K562 (cell line): ENCODE measurements at regions of chr10 and their contacts with region 1.

Region 1: DNA sequence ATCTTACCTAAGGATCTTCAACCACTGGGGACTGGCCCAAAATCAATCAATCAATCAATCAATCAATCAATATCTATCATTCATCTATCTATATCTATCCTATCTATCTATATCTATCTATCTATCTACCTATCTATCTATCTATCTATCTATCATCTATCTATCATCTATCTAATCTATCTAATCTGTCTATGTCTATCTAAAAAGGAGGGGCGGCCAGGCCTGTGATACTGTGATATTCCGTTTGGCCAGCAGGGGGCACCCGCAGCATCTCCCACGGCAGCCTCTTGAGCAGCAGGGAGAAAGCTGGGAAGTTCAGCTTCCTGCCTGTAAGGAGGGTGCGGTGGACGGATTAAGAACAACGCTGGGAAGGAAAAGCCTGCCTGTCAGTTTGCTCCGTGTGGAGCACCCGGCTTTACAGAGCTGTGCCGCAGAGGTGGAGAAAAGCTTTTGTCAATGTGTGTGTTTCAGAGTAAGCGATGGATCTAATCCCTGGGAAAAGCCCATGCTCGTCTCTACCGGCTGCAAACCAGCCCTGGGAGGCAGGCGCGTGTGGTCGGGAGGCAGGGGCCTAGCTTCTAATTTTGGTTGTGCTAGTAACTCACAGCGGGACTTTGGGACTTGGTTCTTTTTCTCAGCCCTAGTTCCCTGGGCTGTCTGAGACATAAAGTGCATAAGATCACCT is 125.0 kb downstream of the SH2D4B start:
- DNase-seq: peak; percentile 83 to 92 (median 88)
- ATAC-seq: peak; percentile 87
- H3K4me3 ChIP-seq: no peak overlapping the region
- H3K27ac ChIP-seq: no peak overlapping the region
- H3K4me1 ChIP-seq: no peaks in the 10 kb centered on the region; a peak in 1 of 5 replicates
- H3K27me3 ChIP-seq: peaks cover 0 to 25% of the 10 kb centered on the region in 2 experiments; a peak in 2 of 5 replicates
- CTCF ChIP-seq: peak; percentile 84 to 91 (median 87)
- EP300 ChIP-seq: no peak
- POLR2A ChIP-seq: no peak
- RAD21 ChIP-seq: peak; percentile 73 to 86

Region 2: GRCh38 chr10:80382989-80383388 is 279.7 kb before region 1 on chr10:
- CTCF ChIA-PET with region 1: no interaction called
- POLR2A ChIA-PET with region 1: no interaction called
- in situ Hi-C with region 1: no loop called
- intact Hi-C with region 1: loop called (anchors 5 kb)
- DNase-seq: peak in 2 of 4 experiments; percentile 57
- ATAC-seq: peak; percentile 48
- H3K4me3 ChIP-seq: no peak overlapping the region
- H3K27ac ChIP-seq: no peak overlapping the region
- H3K4me1 ChIP-seq: no peaks in the 10 kb centered on the region
- H3K27me3 ChIP-seq: peaks cover 5% of the 10 kb centered on the region in 2 experiments; a peak in 4 of 5 replicates
- CTCF ChIP-seq: peak; percentile 66 to 90 (median 79)
- EP300 ChIP-seq: no peak
- POLR2A ChIP-seq: no peak
- RAD21 ChIP-seq: peak; percentile 82

Region 3: GRCh38 chr10:80397014-80397413 is 265.7 kb before region 1 on chr10:
- CTCF ChIA-PET with region 1: no interaction called
- POLR2A ChIA-PET with region 1: no interaction called
- in situ Hi-C with region 1: no loop called
- intact Hi-C with region 1: no loop called
- DNase-seq: peak in 1 of 4 experiments; percentile 4
- ATAC-seq: no peak
- H3K4me3 ChIP-seq: no peak overlapping the region
- H3K27ac ChIP-seq: no peak overlapping the region
- H3K4me1 ChIP-seq: no peaks in the 10 kb centered on the region
- H3K27me3 ChIP-seq: peaks cover 11 to 42% of the 10 kb centered on the region in 2 experiments
- CTCF ChIP-seq: no peak
- EP300 ChIP-seq: no peak
- POLR2A ChIP-seq: no peak
- RAD21 ChIP-seq: no peak

Region 4: DNA sequence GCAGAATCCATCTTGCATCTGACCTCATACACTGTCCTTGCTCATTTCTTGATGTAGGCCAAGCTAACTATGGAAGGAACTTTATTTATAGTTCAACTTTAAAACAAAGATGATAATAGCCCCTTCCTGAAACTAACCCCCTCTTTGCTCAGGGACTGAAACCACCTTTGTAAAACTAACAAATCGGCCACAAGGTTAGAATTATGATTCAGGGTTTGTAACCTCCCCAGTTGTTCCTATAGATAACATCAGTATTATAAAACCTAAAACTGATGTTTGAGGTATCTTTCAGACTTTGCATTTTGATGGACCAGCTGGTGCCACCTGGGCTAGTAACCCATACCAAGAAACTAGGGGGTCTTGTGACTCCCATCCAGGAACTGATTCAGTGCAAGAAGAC is 18.4 kb after region 1 on chr10:
- CTCF ChIA-PET with region 1: no interaction called
- POLR2A ChIA-PET with region 1: no interaction called
- in situ Hi-C with region 1: no loop called
- intact Hi-C with region 1: no loop called
- DNase-seq: no peak
- ATAC-seq: no peak
- H3K4me3 ChIP-seq: no peak overlapping the region
- H3K27ac ChIP-seq: no peak overlapping the region
- H3K4me1 ChIP-seq: no peaks in the 10 kb centered on the region
- H3K27me3 ChIP-seq: no peaks in the 10 kb centered on the region
- CTCF ChIP-seq: no peak
- EP300 ChIP-seq: no peak
- POLR2A ChIP-seq: no peak
- RAD21 ChIP-seq: no peak

Region 5: DNA sequence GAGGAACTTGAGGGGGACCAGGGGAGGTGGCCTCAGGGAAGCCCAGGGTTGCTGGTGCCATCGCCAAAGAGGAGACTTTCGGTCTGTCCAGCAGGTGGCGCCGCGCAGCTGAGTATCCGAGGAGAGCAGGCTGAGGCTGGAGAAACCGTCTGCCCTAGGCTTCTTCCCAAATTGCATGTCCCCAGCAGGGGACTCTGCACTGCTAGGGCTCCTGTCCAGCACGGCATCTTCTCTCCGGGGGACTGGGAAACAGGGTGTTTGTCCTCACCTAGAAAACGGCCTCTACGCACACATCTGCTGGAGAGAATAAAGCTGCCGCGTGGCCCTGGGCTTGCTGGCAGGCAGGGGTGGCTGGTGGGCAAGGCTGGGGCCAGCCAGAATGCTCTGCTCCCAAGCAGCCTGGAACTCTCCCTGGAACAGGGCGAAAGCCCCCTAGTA is 36.9 kb after region 1 on chr10:
- CTCF ChIA-PET with region 1: no interaction called
- POLR2A ChIA-PET with region 1: no interaction called
- in situ Hi-C with region 1: no loop called
- intact Hi-C with region 1: loop called (anchors 2 kb)
- DNase-seq: peak; percentile 86 to 92 (median 88)
- ATAC-seq: peak; percentile 97
- H3K4me3 ChIP-seq: no peak overlapping the region
- H3K27ac ChIP-seq: no peak overlapping the region
- H3K4me1 ChIP-seq: peaks cover 3 to 4% of the 10 kb centered on the region in 2 experiments; a peak in 3 of 5 replicates
- H3K27me3 ChIP-seq: peaks cover 0 to 18% of the 10 kb centered on the region in 2 experiments; a peak in 2 of 5 replicates
- CTCF ChIP-seq: peak; percentile 98
- EP300 ChIP-seq: no peak
- POLR2A ChIP-seq: no peak
- RAD21 ChIP-seq: peak; percentile 99

Region 6: GRCh38 chr10:80861882-80862281 is 199.2 kb after region 1 on chr10:
- CTCF ChIA-PET with region 1: no interaction called
- POLR2A ChIA-PET with region 1: no interaction called
- in situ Hi-C with region 1: no loop called
- intact Hi-C with region 1: loop called (anchors 1 kb)
- DNase-seq: peak; percentile 20 to 43 (median 30)
- ATAC-seq: peak; percentile 84
- H3K4me3 ChIP-seq: no peak overlapping the region
- H3K27ac ChIP-seq: no peak overlapping the region
- H3K4me1 ChIP-seq: no peaks in the 10 kb centered on the region
- H3K27me3 ChIP-seq: peaks cover 0 to 4% of the 10 kb centered on the region in 2 experiments; a peak in 3 of 5 replicates
- CTCF ChIP-seq: peak; percentile 57 to 82 (median 60); a peak in 4 of 6 replicates
- EP300 ChIP-seq: no peak
- POLR2A ChIP-seq: no peak
- RAD21 ChIP-seq: peak; percentile 81 to 90

Region 7: DNA sequence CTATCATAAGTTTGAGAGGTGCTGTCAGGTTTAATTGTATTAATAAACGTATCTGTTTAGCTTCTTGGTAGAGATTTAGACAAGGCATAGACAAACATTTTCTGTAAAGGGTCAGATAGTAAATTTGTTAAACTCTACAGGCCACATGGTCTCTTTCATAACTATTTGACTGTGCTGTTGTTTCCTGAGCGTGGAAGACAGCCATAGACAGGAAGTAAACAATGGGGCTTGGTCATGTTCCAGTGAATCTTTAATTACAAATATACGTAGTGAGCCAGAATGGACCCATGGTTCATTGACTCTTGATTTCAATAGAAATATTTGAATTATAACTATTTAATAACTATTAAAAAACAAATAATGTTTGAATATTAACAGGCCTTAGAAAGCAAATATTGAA is 326.0 kb after region 1 on chr10:
- CTCF ChIA-PET with region 1: no interaction called
- POLR2A ChIA-PET with region 1: no interaction called
- in situ Hi-C with region 1: no loop called
- intact Hi-C with region 1: no loop called
- DNase-seq: no peak
- ATAC-seq: no peak
- H3K4me3 ChIP-seq: no peak overlapping the region
- H3K27ac ChIP-seq: no peak overlapping the region
- H3K4me1 ChIP-seq: no peaks in the 10 kb centered on the region
- H3K27me3 ChIP-seq: no peaks in the 10 kb centered on the region
- CTCF ChIP-seq: no peak
- EP300 ChIP-seq: no peak
- POLR2A ChIP-seq: no peak
- RAD21 ChIP-seq: no peak

Region 8: DNA sequence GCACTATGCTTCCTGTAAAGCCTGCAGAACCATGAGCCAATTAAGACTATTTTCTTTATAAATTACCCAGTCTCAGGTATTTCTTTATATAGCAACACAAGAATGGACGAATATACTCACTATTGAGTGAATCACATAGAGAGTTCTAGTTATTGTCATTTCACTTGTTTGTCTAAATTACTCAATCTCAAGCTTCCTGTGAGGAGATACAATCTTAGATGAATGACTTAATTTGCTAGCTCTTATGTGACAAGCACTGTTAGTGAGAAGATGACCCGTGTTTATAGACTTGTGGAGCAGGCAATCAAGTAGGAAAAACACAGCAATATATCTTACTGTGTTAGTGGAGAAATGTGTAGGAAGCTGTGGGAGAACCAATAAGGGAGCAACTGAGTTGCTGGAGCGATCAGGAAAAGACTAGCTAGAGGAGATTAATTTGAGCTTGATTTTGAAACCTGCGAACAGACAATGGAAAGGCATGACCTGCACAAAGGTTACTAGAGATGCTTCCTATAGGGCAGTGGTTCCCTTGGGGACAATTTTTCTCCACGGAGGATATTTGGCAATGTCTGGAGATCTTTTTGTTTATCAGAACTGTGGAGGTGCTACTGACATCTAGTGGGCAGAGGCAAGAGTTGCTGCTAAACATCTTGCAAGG is 356.1 kb after region 1 on chr10:
- CTCF ChIA-PET with region 1: no interaction called
- POLR2A ChIA-PET with region 1: no interaction called
- in situ Hi-C with region 1: no loop called
- intact Hi-C with region 1: loop called (anchors 2 kb)
- DNase-seq: peak in 2 of 4 experiments; percentile 17 to 50
- ATAC-seq: peak; percentile 90
- H3K4me3 ChIP-seq: no peak overlapping the region
- H3K27ac ChIP-seq: no peak overlapping the region
- H3K4me1 ChIP-seq: no peaks in the 10 kb centered on the region
- H3K27me3 ChIP-seq: no peaks in the 10 kb centered on the region
- CTCF ChIP-seq: peak; percentile 57 to 73 (median 64)
- EP300 ChIP-seq: no peak
- POLR2A ChIP-seq: no peak
- RAD21 ChIP-seq: peak; percentile 18 to 47; a peak in 2 of 4 replicates